ENCODE measurements at regions of chr17 and their contacts with region 1.

Region 1: DNA sequence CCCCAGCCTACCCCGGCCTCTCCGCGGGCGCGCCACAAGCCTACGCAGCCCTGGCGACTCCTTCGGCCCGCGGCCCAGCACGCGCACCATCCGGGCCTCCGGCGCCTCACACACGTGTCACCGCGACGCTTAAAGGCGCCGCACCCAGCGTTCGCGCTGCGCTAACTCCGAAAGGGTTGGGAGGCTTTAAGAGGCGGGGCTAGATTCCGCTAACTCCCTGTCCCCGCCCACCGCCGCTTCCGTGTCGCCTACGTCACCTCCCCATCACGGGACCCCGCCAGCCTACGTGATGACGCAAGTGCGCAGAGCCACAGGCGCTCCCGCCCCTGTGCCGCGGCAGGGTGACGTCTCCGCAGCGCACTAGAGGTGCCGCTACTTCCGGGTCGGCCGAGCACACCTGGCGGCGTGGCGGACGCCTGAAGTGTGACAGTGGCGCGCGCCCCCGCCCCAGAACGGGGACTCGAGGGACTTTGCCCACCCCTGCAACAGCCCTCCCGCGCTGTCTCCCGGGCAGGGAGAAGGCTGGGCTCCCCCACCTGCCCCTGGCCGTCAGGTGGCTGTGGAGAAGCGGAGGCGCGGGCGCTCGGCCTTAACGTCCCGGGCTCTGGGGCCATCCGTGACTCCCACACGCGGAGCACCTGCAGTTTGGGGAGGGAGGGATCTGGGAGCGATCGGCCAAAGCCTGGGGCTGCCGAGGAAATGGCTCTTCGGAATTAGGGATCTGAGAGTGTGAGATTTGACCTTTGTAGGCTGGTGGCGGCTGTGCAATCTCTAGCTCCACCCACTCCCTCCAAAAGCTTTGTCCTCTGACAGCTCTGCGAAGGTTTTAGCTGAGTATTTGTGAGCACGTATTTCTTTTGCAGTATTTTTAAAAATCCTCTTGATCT is at the start of gene USP36:
- DNase-seq: peak; percentile 100
- H3K4me3 ChIP-seq: peak within 1 kb of the TSS; percentile 84
- H3K27ac ChIP-seq: peak within 1 kb of the TSS; percentile 70
- H3K4me1 ChIP-seq: peaks cover 28% of the 10 kb centered on the region
- CTCF ChIP-seq: peak; percentile 24; the same call in 1 of the 2 replicates
- total RNA-seq, gene USP36: 46.6 and 47.2 TPM in 2 replicates

Region 2: GRCh38 chr17:78745407-78746088 is 95.4 kb before region 1 on chr17:
- CTCF ChIA-PET with region 1: no interaction called
- POLR2A ChIA-PET with region 1: no interaction called
- intact Hi-C with region 1: loop called (anchors 2 kb)
- DNase-seq: peak; percentile 70
- H3K4me3 ChIP-seq: no peak overlapping the region
- H3K27ac ChIP-seq: no peak overlapping the region
- H3K4me1 ChIP-seq: peaks cover 100% of the 10 kb centered on the region
- CTCF ChIP-seq: peak; percentile 92

Region 3: GRCh38 chr17:78781948-78782916 is 58.7 kb before region 1 on chr17 and contains the start of gene CYTH1:
- CTCF ChIA-PET with region 1: no interaction called
- POLR2A ChIA-PET with region 1: no interaction called
- intact Hi-C with region 1: loop called (anchors 2 kb)
- DNase-seq: peak; percentile 94
- H3K4me3 ChIP-seq: peak within 1 kb of the TSS; percentile 91
- H3K27ac ChIP-seq: peak within 1 kb of the TSS; percentile 85
- H3K4me1 ChIP-seq: peaks cover 37% of the 10 kb centered on the region
- CTCF ChIP-seq: no peak
- total RNA-seq, gene CYTH1: 73.0 and 88.1 TPM in 2 replicates